Panc1 (cell line): ENCODE measurements at regions of chrX and their contacts with region 1.

Region 1: DNA sequence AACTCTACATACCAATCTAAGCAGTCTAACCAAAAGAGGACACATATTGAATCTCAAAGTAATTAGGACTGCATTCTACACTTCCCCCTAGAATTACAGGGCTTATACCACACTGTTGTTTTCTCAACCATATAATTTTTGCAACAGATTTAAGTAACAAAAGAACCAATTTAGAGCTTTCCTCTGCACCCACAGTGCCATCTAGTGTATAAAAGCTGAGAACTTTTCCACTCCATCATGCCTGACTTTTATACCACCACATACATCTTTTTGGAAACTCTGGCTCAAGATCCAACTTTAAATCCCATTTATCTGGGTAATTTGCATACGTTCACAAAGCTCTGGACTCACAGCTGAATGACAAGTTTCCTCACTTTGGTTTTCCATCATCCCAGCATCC is 99.5 kb downstream of the EFHC2 start:
- DNase-seq: peak; percentile 20
- ATAC-seq: no peak
- H3K4me3 ChIP-seq: no peak overlapping the region
- H3K27ac ChIP-seq: no peak overlapping the region
- H3K4me1 ChIP-seq: no peaks in the 10 kb centered on the region
- H3K27me3 ChIP-seq: no peaks in the 10 kb centered on the region
- CTCF ChIP-seq: peak; percentile 58; the same call in 1 of the 2 replicates

Region 2: GRCh38 chrX:43958529-43958928 is 285.5 kb before region 1 on chrX:
- CTCF ChIA-PET with region 1: interaction called, 8 read pairs
- POLR2A ChIA-PET with region 1: no interaction called
- in situ Hi-C with region 1: no loop called
- intact Hi-C with region 1: loop called (anchors 2 kb)
- DNase-seq: peak; percentile 71
- ATAC-seq: peak; percentile 93
- H3K4me3 ChIP-seq: no peak overlapping the region
- H3K27ac ChIP-seq: no peak overlapping the region
- H3K4me1 ChIP-seq: no peaks in the 10 kb centered on the region
- H3K27me3 ChIP-seq: no peaks in the 10 kb centered on the region
- CTCF ChIP-seq: peak; percentile 74